ENCODE measurements at regions of chr10 and their contacts with region 1.

Region 1: GRCh38 chr10:133261726-133262325 is 14.8 kb downstream of the ADAM8 start:
- DNase-seq: peak; percentile 87
- H3K4me3 Mint-ChIP-seq: peak overlapping the region; percentile 82
- H3K27ac Mint-ChIP-seq: no peak overlapping the region
- H3K4me1 Mint-ChIP-seq: peaks cover 75% of the 10 kb centered on the region
- H3K27me3 Mint-ChIP-seq: no peaks in the 10 kb centered on the region

Region 2: DNA sequence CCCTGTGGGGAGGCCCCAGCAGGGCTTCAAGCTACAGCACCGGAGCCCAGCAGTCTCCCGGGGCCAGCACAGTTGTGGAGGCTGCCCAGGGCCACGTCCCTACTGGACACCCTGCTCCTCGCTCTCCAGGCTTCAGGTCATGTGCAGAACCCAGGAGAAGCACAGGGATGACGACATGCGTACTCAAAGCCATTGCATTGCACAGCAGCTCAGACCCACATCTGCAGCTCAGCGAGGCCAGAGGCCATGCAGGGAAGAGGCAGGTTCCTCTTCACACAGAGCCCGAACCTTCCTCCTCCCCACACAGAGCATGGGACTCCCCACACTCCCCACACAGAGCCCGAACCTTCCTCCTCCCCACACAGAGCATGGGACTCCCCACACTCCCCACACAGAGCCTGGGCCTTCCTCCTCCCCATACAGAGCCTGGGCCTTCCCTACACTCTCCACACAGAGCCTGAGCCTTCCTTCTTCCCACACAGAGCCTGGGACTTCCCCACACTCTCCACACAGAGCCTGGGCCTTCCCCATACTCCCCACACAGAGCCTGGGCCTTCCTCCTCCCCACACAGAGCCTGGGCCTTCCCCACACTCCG is 331.8 kb before region 1 on chr10:
- CTCF ChIA-PET with region 1: no interaction called
- intact Hi-C with region 1: loop called (anchors 2 kb)
- DNase-seq: peak; percentile 56
- H3K4me3 Mint-ChIP-seq: no peak overlapping the region
- H3K27ac Mint-ChIP-seq: peak overlapping the region; percentile 71
- H3K4me1 Mint-ChIP-seq: peaks cover 25% of the 10 kb centered on the region
- H3K27me3 Mint-ChIP-seq: no peaks in the 10 kb centered on the region

Region 3: DNA sequence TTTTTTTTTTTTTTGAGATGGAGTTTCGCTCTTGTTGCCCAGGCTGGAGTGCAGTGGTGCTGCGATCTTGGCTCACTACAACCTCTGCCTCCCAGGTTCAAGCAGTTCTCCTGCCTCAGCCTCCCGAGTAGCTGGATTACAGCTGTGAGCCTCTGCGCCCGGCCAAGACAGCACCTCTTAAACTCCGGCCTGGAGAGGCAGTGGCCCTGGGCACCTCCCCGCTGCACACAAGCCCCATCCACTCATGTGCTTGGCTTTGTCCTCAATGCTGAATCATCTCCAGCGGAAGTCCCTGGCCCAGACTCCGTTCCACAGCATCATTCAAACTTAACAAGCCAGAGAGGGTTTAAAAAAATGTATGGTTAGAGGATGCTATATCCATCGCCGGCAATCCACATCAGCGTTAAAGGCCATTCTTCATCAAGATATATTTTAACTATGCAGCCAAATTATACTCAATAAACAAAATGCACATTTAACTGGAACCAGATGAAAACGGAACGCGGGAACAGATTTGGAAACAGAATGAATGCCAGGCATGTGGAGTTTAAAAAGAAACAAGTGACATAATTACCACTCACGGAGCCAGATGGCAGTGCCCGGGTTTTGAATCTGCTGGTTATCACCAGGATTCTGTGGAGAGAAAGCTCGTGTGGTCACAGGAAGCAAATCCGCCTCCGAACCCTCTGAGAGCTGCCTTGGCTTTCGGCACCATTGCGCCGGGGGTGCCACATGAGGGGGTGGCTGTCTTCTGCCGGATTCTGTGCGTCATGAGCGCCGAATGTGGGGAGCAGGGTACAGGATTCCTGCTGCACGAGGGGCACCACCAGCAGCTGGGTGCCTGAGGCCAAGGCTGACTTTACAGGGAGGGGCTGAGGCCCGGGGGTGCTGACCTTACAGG is 273.9 kb before region 1 on chr10:
- CTCF ChIA-PET with region 1: no interaction called
- intact Hi-C with region 1: no loop called
- DNase-seq: no peak
- H3K4me3 Mint-ChIP-seq: no peak overlapping the region
- H3K27ac Mint-ChIP-seq: no peak overlapping the region
- H3K4me1 Mint-ChIP-seq: no peaks in the 10 kb centered on the region
- H3K27me3 Mint-ChIP-seq: no peaks in the 10 kb centered on the region

Region 4: DNA sequence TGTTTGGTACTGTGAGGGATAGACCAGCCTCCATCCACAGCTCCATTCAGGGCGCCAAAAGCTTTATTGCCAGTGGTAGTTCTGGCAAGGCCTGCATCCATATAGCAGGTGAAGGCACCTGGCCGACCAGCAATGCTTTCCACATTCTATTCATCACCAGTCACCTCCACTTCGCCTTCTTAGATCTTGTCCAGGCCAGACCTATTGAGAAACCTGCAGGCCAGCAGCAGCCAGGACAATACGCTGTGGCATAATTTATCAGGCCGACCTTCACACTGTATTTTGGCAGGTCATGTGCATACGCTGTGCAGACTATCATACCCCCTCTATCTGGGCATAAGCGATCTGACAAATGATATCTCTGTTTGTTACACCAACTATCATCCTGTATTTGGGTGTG is 117.1 kb before region 1 on chr10:
- CTCF ChIA-PET with region 1: interaction called, 9 read pairs
- intact Hi-C with region 1: loop called (anchors 1 kb)
- DNase-seq: no peak
- H3K4me3 Mint-ChIP-seq: no peak overlapping the region
- H3K27ac Mint-ChIP-seq: no peak overlapping the region
- H3K4me1 Mint-ChIP-seq: peaks cover 3% of the 10 kb centered on the region
- H3K27me3 Mint-ChIP-seq: peaks cover 33% of the 10 kb centered on the region

Region 5: GRCh38 chr10:133214468-133215410 is 47.1 kb before region 1 on chr10:
- CTCF ChIA-PET with region 1: no interaction called
- intact Hi-C with region 1: no loop called
- DNase-seq: no peak
- H3K4me3 Mint-ChIP-seq: no peak overlapping the region
- H3K27ac Mint-ChIP-seq: no peak overlapping the region
- H3K4me1 Mint-ChIP-seq: peaks cover 4% of the 10 kb centered on the region
- H3K27me3 Mint-ChIP-seq: peaks cover 2% of the 10 kb centered on the region

Region 6: GRCh38 chr10:133278577-133279265 is 16.9 kb after region 1 on chr10:
- CTCF ChIA-PET with region 1: interaction called, 8 read pairs
- intact Hi-C with region 1: loop called (anchors 1 kb)
- DNase-seq: no peak
- H3K4me3 Mint-ChIP-seq: no peak overlapping the region
- H3K27ac Mint-ChIP-seq: peak overlapping the region; percentile 19
- H3K4me1 Mint-ChIP-seq: peaks cover 23% of the 10 kb centered on the region
- H3K27me3 Mint-ChIP-seq: no peaks in the 10 kb centered on the region

Region 7: DNA sequence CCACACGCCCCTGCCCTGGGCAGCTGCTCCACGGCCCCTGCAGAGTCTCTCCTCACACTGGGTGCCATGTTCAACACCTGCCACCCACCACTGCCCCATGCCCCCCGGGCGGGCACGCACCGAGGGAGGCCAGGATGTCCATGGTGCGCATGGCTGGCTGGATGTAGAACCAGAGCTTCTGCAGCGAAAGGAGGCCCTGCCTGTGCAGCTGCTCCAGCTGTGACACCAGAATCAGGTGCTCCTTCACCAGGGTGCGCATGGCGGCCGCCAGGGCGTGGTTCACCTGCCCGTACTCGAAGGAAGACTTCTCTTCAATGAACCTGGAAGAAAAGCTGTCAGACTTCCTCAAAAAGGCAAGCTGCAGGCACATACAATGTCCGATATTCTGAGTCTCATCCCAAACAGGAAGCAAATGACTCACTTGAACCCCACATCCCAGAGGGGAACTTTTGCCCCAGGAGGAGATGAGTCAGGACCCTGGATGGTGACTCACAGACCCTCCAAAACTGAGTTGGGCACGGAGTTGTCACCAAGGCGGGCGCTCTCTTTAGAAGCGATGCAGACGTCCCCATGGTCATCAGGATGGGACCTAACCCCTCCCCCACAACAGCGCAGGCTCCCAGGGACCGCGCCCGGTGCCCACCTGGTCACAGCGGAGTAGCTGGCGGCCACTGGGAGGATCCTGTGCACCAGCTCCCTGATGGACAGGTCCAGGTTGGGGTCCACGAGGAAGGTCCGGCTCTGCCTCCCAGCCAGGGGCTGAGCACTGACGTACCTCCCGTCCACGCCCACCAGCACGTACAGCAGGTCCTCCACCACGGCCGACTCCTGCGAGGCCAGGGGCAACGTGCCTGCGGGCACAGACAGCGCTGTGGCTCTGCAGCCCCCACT is 31.3 kb after region 1 on chr10:
- CTCF ChIA-PET with region 1: no interaction called
- intact Hi-C with region 1: no loop called
- DNase-seq: no peak
- H3K4me3 Mint-ChIP-seq: no peak overlapping the region
- H3K27ac Mint-ChIP-seq: no peak overlapping the region
- H3K4me1 Mint-ChIP-seq: peaks cover 4% of the 10 kb centered on the region
- H3K27me3 Mint-ChIP-seq: no peaks in the 10 kb centered on the region

Region 8: GRCh38 chr10:133357285-133358151 is 95.7 kb after region 1 on chr10 and contains the start of gene FUOM:
- CTCF ChIA-PET with region 1: no interaction called
- intact Hi-C with region 1: loop called (anchors 1 kb)
- DNase-seq: peak; percentile 75
- H3K4me3 Mint-ChIP-seq: peak within 1 kb of the TSS; percentile 77
- H3K27ac Mint-ChIP-seq: no peak within 1 kb of the TSS
- H3K4me1 Mint-ChIP-seq: peaks cover 3% of the 10 kb centered on the region
- H3K27me3 Mint-ChIP-seq: no peaks in the 10 kb centered on the region
- total RNA-seq, gene FUOM: 29.9 to 34.9 TPM

Region 9: GRCh38 chr10:133397938-133398337 is 136.1 kb after region 1 on chr10:
- CTCF ChIA-PET with region 1: no interaction called
- intact Hi-C with region 1: no loop called
- DNase-seq: no peak
- H3K4me3 Mint-ChIP-seq: no peak overlapping the region
- H3K27ac Mint-ChIP-seq: no peak overlapping the region
- H3K4me1 Mint-ChIP-seq: peaks cover 47% of the 10 kb centered on the region
- H3K27me3 Mint-ChIP-seq: no peaks in the 10 kb centered on the region

Measured in activated naive CD4-positive, alpha-beta T cell treated with anti-CD3 and anti-CD28 coated beads for 36 hours (primary cell).